ENCODE measurements at regions of chr1 and their contacts with region 1.

Region 1: GRCh38 chr1:93846211-93846991 is 32.6 kb downstream of the DNTTIP2 start:
- DNase-seq: peak; percentile 94
- ATAC-seq: peak; percentile 57
- H3K4me3 ChIP-seq: peak overlapping the region; percentile 45 to 90 (median 86)
- H3K4me3 Mint-ChIP-seq: peak overlapping the region; percentile 95
- H3K27ac ChIP-seq: peak overlapping the region; percentile 91 to 92
- H3K27ac Mint-ChIP-seq: peak overlapping the region; percentile 100
- H3K4me1 ChIP-seq: peaks cover 5 to 30% of the 10 kb centered on the region in 2 donors
- H3K4me1 Mint-ChIP-seq: peaks cover 24% of the 10 kb centered on the region
- H3K27me3 ChIP-seq: no peaks in the 10 kb centered on the region
- H3K27me3 Mint-ChIP-seq: peaks cover 4% of the 10 kb centered on the region
- CTCF ChIP-seq: no peak

Region 2: GRCh38 chr1:93304716-93305138 is 541.7 kb before region 1 on chr1:
- CTCF ChIA-PET with region 1: interaction called, 8 read pairs
- POLR2A ChIA-PET with region 1: no interaction called
- intact Hi-C with region 1: loop called (anchors 1 kb)
- DNase-seq: peak; percentile 73
- ATAC-seq: peak; percentile 53
- H3K4me3 ChIP-seq: no peak overlapping the region
- H3K4me3 Mint-ChIP-seq: no peak overlapping the region
- H3K27ac ChIP-seq: no peak overlapping the region
- H3K27ac Mint-ChIP-seq: no peak overlapping the region
- H3K4me1 ChIP-seq: no peaks in the 10 kb centered on the region
- H3K4me1 Mint-ChIP-seq: no peaks in the 10 kb centered on the region
- H3K27me3 ChIP-seq: no peaks in the 10 kb centered on the region
- H3K27me3 Mint-ChIP-seq: no peaks in the 10 kb centered on the region
- CTCF ChIP-seq: peak; percentile 88

Region 3: DNA sequence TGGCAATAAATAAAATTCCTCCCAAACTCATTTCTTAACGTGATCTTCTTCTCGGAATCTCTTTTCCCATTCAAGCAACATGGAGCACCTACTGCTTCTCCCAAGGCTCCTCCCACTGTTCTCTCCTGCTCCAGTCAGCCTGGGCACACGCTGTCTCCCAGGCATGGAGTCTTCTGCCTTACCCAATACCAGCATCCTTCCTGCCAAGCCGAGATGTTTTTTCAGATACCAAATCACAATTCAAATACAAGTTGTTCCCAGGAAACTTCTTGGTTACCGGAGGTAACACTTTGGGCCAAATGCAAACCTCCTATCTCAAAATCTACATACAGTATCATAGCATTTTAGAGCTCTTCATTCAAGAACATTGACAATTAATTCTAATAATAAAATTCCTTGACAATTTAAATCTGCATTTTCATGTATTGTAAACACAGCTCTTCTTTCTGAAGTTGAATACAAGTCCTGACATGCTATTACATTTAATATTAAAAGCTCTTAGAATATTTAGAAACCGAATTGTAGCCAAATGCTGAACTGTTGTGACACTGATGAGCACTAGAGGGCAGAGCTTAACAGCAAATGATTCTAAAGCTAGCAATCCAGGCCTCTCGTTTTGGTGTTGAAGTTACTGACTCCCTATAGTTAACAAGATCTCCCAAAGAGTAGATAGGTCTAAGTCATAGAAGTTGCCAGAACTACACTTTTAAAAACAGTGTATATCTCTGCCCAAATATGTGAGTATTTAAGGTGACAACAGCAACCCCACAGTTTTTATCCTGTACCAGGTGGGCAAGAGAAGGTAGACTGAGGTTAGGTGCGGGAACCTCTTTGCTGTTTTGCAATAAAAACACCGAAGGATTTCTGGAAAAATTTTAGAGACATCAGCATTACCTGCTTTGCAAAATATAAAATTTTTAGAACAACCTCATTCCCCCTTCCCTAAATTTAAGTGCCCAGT is 217.0 kb before region 1 on chr1:
- CTCF ChIA-PET with region 1: interaction called, 229 read pairs
- POLR2A ChIA-PET with region 1: interaction called, 4 read pairs
- intact Hi-C with region 1: loop called (anchors 1 kb)
- DNase-seq: peak; percentile 80
- ATAC-seq: peak; percentile 89
- H3K4me3 ChIP-seq: no peak overlapping the region
- H3K4me3 Mint-ChIP-seq: no peak overlapping the region
- H3K27ac ChIP-seq: no peak overlapping the region
- H3K27ac Mint-ChIP-seq: no peak overlapping the region
- H3K4me1 ChIP-seq: no peaks in the 10 kb centered on the region
- H3K4me1 Mint-ChIP-seq: peaks cover 4% of the 10 kb centered on the region
- H3K27me3 ChIP-seq: no peaks in the 10 kb centered on the region
- H3K27me3 Mint-ChIP-seq: no peaks in the 10 kb centered on the region
- CTCF ChIP-seq: peak; percentile 94

Region 4: GRCh38 chr1:93734999-93735398 is 111.4 kb before region 1 on chr1:
- CTCF ChIA-PET with region 1: interaction called, 11 read pairs
- POLR2A ChIA-PET with region 1: no interaction called
- intact Hi-C with region 1: no loop called
- DNase-seq: peak; percentile 24
- ATAC-seq: no peak
- H3K4me3 ChIP-seq: no peak overlapping the region
- H3K4me3 Mint-ChIP-seq: no peak overlapping the region
- H3K27ac ChIP-seq: no peak overlapping the region
- H3K27ac Mint-ChIP-seq: no peak overlapping the region
- H3K4me1 ChIP-seq: peaks cover 0 to 8% of the 10 kb centered on the region in 2 donors
- H3K4me1 Mint-ChIP-seq: peaks cover 18% of the 10 kb centered on the region
- H3K27me3 ChIP-seq: no peaks in the 10 kb centered on the region
- H3K27me3 Mint-ChIP-seq: no peaks in the 10 kb centered on the region
- CTCF ChIP-seq: peak; percentile 33

Region 5: DNA sequence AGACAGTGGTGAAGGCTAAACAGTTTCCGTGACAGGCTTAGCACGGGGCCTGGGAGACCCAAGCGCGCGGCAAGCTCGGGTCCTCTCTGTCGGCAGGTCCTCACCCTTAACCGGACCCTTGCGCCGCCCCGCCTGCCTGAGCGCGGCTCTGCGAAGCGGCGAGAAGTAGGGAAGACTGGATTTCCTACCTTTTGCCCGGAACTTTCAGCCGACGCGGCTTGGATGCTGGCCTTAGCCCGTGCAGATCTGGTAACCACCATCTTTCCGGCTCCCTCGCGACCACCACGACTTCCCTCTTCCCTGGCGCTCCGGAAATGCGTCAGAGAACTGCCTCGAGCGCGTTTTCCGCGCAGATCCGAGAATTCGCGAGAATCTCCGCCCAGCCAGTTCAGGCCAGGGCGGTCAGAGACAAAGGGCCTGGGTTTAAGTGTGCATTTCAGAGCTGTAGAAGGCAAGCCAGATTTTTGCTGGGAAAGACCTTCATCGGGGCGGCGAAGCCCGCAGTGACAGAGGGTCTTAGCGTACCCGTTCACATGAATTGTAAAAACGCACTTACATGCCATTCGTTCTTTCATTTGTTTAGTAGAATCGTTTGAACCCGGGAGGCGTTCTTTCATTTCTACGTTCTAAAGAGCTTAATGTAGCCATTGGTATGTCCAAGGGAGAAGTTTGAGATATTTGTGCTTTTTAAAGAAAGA is 32.6 kb after region 1 on chr1 and contains the start of gene DNTTIP2:
- CTCF ChIA-PET with region 1: interaction called, 5 read pairs
- POLR2A ChIA-PET with region 1: interaction called, 4 read pairs
- intact Hi-C with region 1: loop called (anchors 1 kb)
- DNase-seq: peak; percentile 91
- ATAC-seq: peak; percentile 89
- H3K4me3 ChIP-seq: peak within 1 kb of the TSS; percentile 82 to 99 (median 96)
- H3K4me3 Mint-ChIP-seq: peak within 1 kb of the TSS; percentile 98
- H3K27ac ChIP-seq: peak within 1 kb of the TSS; percentile 89 to 94
- H3K27ac Mint-ChIP-seq: peak within 1 kb of the TSS; percentile 100
- H3K4me1 ChIP-seq: peaks cover 26 to 30% of the 10 kb centered on the region in 2 donors
- H3K4me1 Mint-ChIP-seq: peaks cover 42% of the 10 kb centered on the region
- H3K27me3 ChIP-seq: no peaks in the 10 kb centered on the region
- H3K27me3 Mint-ChIP-seq: no peaks in the 10 kb centered on the region
- CTCF ChIP-seq: no peak
- total RNA-seq, gene DNTTIP2: 58.3 and 62.1 TPM in 2 replicates